ENCODE measurements at regions of chr1 and their contacts with region 1.

Region 1: DNA sequence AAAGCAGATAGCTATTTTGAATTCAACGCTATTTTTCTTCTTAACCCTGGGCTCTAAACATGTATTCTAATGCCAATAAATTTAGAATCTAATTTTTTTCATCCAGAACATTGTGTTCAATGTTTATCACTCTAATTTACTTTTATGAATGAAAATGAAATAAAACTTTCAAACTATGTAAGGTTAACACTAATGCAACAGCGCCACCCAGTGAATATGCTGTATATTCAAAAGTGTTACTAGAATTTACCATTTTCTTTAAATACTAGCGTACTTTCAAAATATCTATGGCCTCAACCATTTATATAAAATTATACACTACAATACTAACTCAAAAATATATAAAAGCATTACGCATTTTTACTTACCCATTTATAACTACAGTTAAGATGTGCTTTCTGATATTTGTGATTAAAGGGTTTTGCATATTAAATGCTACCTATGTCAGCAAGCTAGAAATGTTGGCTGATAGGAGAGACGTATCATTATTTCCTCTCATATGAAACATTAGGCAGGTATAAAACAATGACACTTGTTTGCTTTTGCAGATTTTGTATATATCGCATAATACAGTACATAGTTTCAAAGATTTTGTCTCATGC is 5.9 kb upstream of the NUF2 start:
- DNase-seq: peak; percentile 66
- ATAC-seq: no peak
- H3K4me3 Mint-ChIP-seq: no peak overlapping the region
- H3K27ac Mint-ChIP-seq: no peak overlapping the region
- H3K4me1 Mint-ChIP-seq: peaks cover 9% of the 10 kb centered on the region
- H3K27me3 Mint-ChIP-seq: no peaks in the 10 kb centered on the region

Region 2: DNA sequence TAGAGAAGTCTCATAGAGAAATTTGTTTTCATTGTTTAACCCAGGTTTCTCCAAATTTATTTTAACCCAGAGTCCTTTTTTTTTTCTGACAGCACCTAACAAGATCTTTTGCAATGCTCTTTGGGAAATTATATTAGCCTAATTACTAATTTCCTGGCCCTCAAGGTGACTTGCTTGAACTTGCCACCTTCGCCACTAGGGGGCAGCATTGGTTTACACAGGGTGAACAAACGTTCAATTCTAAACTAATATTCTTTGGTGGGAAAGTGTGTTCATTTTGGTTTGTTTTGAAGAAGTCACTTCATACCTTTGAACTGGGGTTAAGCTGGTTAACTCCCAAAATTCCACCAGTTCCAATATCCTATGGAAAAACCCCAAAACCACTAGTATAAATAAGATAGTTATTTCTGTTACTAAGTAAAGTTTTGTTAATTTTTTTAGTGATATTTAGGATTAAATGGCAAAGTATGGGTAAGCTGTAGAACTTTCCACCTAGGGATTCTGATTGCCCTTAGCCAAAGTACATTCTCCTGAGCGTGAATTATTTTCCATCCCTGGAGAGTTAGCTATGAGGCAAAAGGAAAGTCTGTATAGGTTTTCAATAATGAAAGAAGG is 467.9 kb before region 1 on chr1:
- CTCF ChIA-PET with region 1: interaction called, 52 read pairs
- POLR2A ChIA-PET with region 1: no interaction called
- DNase-seq: peak; percentile 86
- ATAC-seq: no peak
- H3K4me3 Mint-ChIP-seq: no peak overlapping the region
- H3K27ac Mint-ChIP-seq: no peak overlapping the region
- H3K4me1 Mint-ChIP-seq: no peaks in the 10 kb centered on the region
- H3K27me3 Mint-ChIP-seq: peaks cover 14% of the 10 kb centered on the region

Region 3: DNA sequence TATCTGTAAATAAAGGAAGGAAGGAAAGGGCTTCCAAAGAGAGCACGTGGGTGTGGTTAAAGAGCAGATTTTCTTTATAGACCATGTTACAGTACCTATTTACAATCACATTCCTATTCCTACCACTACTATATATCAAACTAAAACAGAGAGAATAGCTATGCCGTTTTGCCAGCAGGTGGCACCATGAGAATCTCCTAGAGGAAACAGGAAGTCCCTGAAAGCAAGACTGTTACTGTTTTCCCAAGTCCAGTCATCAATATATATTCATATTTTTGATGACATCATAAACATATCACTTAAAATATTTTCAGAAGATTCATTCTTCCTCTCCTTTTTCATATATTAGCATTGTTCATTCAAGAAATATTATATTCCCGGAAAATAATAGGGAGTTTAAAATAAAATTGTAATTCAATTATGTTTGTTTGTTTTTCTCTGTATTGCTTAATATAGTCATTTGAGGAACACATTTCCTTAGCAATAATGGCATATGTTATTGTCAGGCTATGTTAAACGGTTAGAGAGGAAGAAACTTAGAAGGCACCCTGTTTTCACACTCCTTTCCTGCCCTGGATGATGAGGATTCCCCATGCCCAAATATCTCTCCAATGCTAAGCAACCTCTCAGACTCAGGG is 461.5 kb before region 1 on chr1:
- CTCF ChIA-PET with region 1: interaction called, 52 read pairs
- POLR2A ChIA-PET with region 1: no interaction called
- DNase-seq: peak; percentile 68
- ATAC-seq: peak; percentile 53
- H3K4me3 Mint-ChIP-seq: no peak overlapping the region
- H3K27ac Mint-ChIP-seq: no peak overlapping the region
- H3K4me1 Mint-ChIP-seq: no peaks in the 10 kb centered on the region
- H3K27me3 Mint-ChIP-seq: peaks cover 7% of the 10 kb centered on the region

Region 4: GRCh38 chr1:163071405-163072255 is 244.2 kb before region 1 on chr1:
- CTCF ChIA-PET with region 1: interaction called, 56 read pairs
- POLR2A ChIA-PET with region 1: no interaction called
- DNase-seq: peak; percentile 62
- ATAC-seq: no peak
- H3K4me3 Mint-ChIP-seq: no peak overlapping the region
- H3K27ac Mint-ChIP-seq: no peak overlapping the region
- H3K4me1 Mint-ChIP-seq: no peaks in the 10 kb centered on the region
- H3K27me3 Mint-ChIP-seq: peaks cover 26% of the 10 kb centered on the region

Region 5: GRCh38 chr1:163174524-163175437 is 141.1 kb before region 1 on chr1:
- CTCF ChIA-PET with region 1: interaction called, 13 read pairs
- POLR2A ChIA-PET with region 1: no interaction called
- DNase-seq: peak; percentile 53
- ATAC-seq: peak; percentile 36
- H3K4me3 Mint-ChIP-seq: no peak overlapping the region
- H3K27ac Mint-ChIP-seq: no peak overlapping the region
- H3K4me1 Mint-ChIP-seq: no peaks in the 10 kb centered on the region
- H3K27me3 Mint-ChIP-seq: no peaks in the 10 kb centered on the region

Region 6: GRCh38 chr1:163440090-163440489 is 124.2 kb after region 1 on chr1:
- CTCF ChIA-PET with region 1: no interaction called
- POLR2A ChIA-PET with region 1: no interaction called
- DNase-seq: no peak
- ATAC-seq: no peak
- H3K4me3 Mint-ChIP-seq: no peak overlapping the region
- H3K27ac Mint-ChIP-seq: no peak overlapping the region
- H3K4me1 Mint-ChIP-seq: no peaks in the 10 kb centered on the region
- H3K27me3 Mint-ChIP-seq: peaks cover 4% of the 10 kb centered on the region